ENCODE measurements at regions of chr20 and their contacts with region 1.

Region 1: DNA sequence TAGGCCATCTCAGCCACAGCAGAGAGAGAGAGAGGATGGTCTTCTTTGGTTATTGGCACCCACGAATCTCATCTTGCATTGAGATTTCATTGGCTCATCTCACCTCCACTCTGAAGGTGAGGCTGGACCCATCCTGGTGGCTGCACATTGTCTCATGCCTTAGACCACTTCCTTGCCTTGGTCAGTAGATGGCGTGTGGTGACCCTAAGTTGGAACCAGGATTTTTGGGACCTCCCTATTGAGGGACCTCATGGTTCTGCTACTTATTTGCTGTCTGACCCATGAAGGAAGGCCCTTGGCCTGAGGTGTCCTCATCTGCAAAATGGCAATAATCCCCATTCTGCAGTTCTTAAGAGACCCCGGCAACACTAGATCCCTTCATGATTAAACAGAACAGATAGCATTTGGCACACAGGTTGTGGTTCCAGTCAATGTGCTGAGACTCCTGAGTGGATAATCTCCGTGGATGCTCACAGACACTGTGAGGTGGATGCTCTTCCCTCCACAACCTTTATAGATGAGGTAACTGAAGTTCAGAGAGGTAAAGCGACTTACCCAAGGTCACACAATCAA is 21.5 kb upstream of the AAR2 start:
- DNase-seq: no peak
- H3K4me3 ChIP-seq: no peak overlapping the region
- H3K27ac ChIP-seq: no peak overlapping the region
- H3K4me1 ChIP-seq: no peaks in the 10 kb centered on the region
- H3K27me3 ChIP-seq: peaks cover 0 to 2% (median 0%) of the 10 kb centered on the region in 4 experiments; a peak in 1 of 7 replicates
- CTCF ChIP-seq: peak; percentile 82 to 94 (median 84)
- EP300 ChIP-seq: no peak
- POLR2A ChIP-seq: no peak
- RAD21 ChIP-seq: peak; percentile 87 to 93

Region 2: DNA sequence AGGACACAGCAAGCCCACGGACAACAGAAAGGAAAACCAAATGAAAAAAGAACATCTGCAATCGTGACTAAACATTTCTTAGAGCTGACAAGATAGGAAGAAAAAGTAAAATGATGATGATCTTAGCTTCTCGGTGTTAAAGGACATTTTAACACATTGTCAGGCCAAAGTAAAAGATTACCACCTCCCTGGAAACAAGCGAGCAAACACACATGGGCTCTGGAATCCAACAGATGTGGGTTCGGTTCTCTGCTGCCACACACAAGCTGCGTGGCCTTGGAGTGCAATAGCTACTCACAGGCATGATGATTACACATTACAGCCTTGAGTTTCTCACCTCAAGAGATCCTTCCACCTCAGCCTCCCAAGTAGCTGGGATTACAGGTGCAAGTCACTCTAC is 14.0 kb after region 1 on chr20:
- CTCF ChIA-PET with region 1: interaction called, 15 read pairs
- POLR2A ChIA-PET with region 1: interaction called, 7 read pairs
- DNase-seq: no peak
- H3K4me3 ChIP-seq: no peak overlapping the region
- H3K27ac ChIP-seq: no peak overlapping the region
- H3K4me1 ChIP-seq: no peaks in the 10 kb centered on the region
- H3K27me3 ChIP-seq: no peaks in the 10 kb centered on the region
- CTCF ChIP-seq: no peak
- EP300 ChIP-seq: no peak
- POLR2A ChIP-seq: no peak
- RAD21 ChIP-seq: no peak

Region 3: DNA sequence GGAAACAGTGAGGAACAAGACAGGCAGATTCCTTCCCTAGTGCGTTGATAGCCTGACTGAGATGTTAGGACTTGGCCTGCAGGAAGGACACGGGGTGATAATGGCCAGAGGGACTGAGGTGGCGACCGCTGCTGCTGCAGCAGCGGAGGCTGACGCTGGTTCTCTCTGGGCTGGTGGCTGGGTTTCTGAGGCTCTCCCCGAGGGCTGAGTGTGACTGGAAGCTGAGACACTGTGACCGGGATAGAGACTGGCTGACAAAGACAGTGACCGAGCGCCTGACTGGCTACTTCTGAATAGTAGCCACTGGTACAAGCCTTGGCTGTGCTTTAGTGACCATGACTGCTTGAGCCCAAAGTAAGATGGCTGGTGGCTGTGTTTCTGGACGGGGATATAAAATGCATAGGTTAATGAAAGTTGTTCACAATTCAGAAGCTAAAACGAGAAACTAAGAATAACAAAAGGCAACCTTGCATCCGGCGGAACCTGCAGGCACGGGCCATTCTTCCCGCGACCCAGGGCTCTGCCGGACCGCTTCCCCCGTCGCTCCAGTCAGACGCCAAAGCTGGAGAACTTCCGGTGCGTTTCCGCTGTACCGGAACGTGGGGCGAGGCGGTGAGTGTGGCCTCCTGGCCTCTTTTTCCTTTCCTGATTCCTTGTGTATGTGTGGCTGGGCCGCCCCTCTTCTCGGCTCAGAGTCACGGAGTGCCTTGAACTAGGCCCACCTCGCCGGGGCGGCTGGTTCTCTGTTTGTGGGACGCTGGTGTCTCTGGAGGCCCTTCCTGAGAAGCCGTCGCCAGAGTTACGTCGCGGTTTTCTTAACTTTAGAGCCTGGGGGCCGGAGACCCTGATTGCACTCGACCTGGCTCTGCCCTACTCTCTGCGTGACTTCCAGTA is 21.4 kb after region 1 on chr20 and contains the start of gene AAR2:
- CTCF ChIA-PET with region 1: interaction called, 21 read pairs
- POLR2A ChIA-PET with region 1: interaction called, 10 read pairs
- DNase-seq: peak; percentile 43 to 88
- H3K4me3 ChIP-seq: peak within 1 kb of the TSS; percentile 73 to 92 (median 82)
- H3K27ac ChIP-seq: peak within 1 kb of the TSS; percentile 74
- H3K4me1 ChIP-seq: peaks cover 0 to 7% (median 5%) of the 10 kb centered on the region in 4 experiments; a peak in 6 of 7 replicates
- H3K27me3 ChIP-seq: no peaks in the 10 kb centered on the region
- CTCF ChIP-seq: no peak
- EP300 ChIP-seq: peak in 1 of 2 experiments; percentile 35; a peak in 1 of 3 replicates
- POLR2A ChIP-seq: peak; percentile 83 to 93
- RAD21 ChIP-seq: no peak
- total RNA-seq, gene AAR2: 25.4 and 25.5 TPM in 2 replicates